AG04449 (cell line): ENCODE measurements at regions of chr6 and their contacts with region 1.

Region 1: DNA sequence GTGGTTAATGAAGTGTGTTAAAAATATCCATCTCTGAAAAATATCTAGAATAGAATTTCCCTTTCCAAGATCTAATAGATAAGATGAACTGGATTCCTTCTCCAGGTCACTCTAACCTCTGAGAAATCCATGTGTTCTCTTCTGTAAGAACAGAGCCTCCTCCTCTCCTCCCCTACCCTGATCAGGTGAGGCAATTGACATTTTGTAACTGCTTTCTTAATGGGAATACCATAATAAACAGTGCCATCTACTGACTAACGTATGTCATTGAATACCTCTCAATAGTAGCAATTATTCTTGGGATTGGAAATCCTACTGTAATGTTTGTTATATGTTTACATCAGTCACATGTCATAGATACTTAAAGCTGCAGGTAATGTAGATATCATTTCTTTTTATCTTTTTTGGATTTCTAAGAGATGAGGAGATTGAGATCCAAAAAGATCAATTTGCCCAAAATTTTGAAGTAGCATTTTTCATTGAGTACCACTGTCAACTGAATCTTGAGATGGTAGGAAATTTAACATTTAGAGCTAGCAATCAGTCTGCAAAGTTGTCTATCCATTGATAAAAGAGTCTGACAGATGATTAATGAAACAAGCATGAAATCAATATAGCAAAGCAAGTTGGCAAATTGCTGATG is 365.8 kb upstream of the HSF2 start:
- DNase-seq: no peak
- H3K4me3 ChIP-seq: no peak overlapping the region
- CTCF ChIP-seq: peak; percentile 43

Region 2: DNA sequence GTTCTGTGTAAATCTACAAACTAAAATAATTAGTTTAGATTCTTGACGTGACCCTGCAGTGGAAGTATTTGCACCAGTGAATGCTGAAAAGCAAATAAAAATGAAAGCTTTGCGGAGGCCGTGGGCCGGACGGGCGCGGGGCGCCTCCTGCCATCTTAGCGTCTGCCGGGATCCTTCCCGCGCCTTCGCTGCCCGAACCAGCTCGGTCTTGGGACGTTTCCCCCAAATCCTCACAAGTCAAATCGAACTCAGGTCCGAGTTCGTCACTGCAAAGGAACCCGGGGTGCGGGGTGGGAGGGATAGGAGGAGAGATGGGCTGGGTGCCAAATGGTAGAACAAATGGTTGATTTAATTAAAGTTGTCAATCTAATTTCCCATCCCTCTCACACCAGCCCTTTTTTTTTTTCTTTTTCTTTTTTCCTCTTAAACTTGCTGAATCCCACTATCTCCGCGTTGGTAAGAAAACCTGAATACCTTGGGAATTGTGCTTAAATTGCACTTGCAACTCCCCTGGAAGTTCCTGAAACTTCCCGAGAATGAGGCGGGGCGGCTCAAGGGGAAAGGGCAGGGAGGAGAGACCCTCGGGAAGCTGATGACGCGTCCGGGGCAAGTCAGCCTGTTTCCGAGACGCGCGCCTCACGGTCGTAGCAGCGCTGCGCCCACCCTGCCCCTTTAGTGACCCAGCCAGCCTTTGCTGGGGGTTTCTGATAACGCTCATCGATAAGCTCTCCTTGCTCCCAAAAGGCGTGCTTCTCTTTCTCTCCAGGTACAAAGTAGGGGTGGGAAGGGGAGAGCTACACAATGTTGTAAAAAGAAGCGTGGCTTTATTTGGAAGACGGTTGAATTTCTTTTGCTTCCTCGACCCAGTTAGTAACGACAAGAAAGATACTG is 596.5 kb before region 1 on chr6:
- CTCF ChIA-PET with region 1: interaction called, 53 read pairs
- POLR2A ChIA-PET with region 1: no interaction called
- DNase-seq: no peak
- H3K4me3 ChIP-seq: peak overlapping the region; percentile 87
- CTCF ChIP-seq: no peak

Region 3: GRCh38 chr6:122020588-122021264 is 12.9 kb before region 1 on chr6:
- CTCF ChIA-PET with region 1: interaction called, 11 read pairs
- POLR2A ChIA-PET with region 1: no interaction called
- DNase-seq: no peak
- H3K4me3 ChIP-seq: no peak overlapping the region
- CTCF ChIP-seq: no peak